ENCODE measurements at regions of chr3 and their contacts with region 1.

Region 1: GRCh38 chr3:125594581-125595011 is 701 bp downstream of the OSBPL11 start:
- DNase-seq: peak; percentile 38
- ATAC-seq: no peak
- H3K4me3 Mint-ChIP-seq: peak overlapping the region; percentile 95
- H3K27ac Mint-ChIP-seq: peak overlapping the region; percentile 84
- H3K4me1 Mint-ChIP-seq: peaks cover 18% of the 10 kb centered on the region
- H3K27me3 Mint-ChIP-seq: no peaks in the 10 kb centered on the region

Region 2: GRCh38 chr3:125519678-125520589 is 74.7 kb before region 1 on chr3 and contains the start of gene SNX4:
- POLR2A ChIA-PET with region 1: interaction called, 11 read pairs
- DNase-seq: peak; percentile 88
- ATAC-seq: peak; percentile 99
- H3K4me3 Mint-ChIP-seq: peak within 1 kb of the TSS; percentile 97
- H3K27ac Mint-ChIP-seq: peak within 1 kb of the TSS; percentile 95
- H3K4me1 Mint-ChIP-seq: peaks cover 17% of the 10 kb centered on the region
- H3K27me3 Mint-ChIP-seq: no peaks in the 10 kb centered on the region
- total RNA-seq, gene SNX4: 31.3 to 31.6 TPM

Measured in activated naive CD8-positive, alpha-beta T cell treated with anti-CD3 and anti-CD28 coated beads, Interleukin-2, amount 10 ng/mL, durations not matched to agents 7 days and 5 days (primary cell).